CD8-positive, alpha-beta memory T cell (primary cell): ENCODE measurements at regions of chr12 and their contacts with region 1.

Region 1: GRCh38 chr12:64551698-64552097 is 58.6 kb upstream of the RASSF3 start:
- DNase-seq: no peak
- H3K4me3 ChIP-seq: no peak overlapping the region
- H3K4me3 Mint-ChIP-seq: no peak overlapping the region
- H3K27ac ChIP-seq: no peak overlapping the region
- H3K27ac Mint-ChIP-seq: no peak overlapping the region
- H3K4me1 ChIP-seq: peaks cover 8% of the 10 kb centered on the region
- H3K4me1 Mint-ChIP-seq: peaks cover 7 to 8% (median 7%) of the 10 kb centered on the region in 3 donors
- H3K27me3 ChIP-seq: no peaks in the 10 kb centered on the region
- H3K27me3 Mint-ChIP-seq: no peaks in the 10 kb centered on the region

Region 2: GRCh38 chr12:64610149-64610678 is 58.5 kb after region 1 on chr12 and contains the start of gene RASSF3:
- CTCF ChIA-PET with region 1: interaction called, 14 read pairs
- POLR2A ChIA-PET with region 1: interaction called, 4 read pairs
- DNase-seq: peak; percentile 71 to 82 (median 77)
- H3K4me3 ChIP-seq: peak within 1 kb of the TSS; percentile 90
- H3K4me3 Mint-ChIP-seq: peak within 1 kb of the TSS; percentile 88 to 99 (median 98)
- H3K27ac ChIP-seq: peak within 1 kb of the TSS; percentile 82
- H3K27ac Mint-ChIP-seq: peak within 1 kb of the TSS; percentile 89 to 99 (median 95)
- H3K4me1 ChIP-seq: peaks cover 40% of the 10 kb centered on the region
- H3K4me1 Mint-ChIP-seq: peaks cover 29 to 53% (median 42%) of the 10 kb centered on the region in 3 donors
- H3K27me3 ChIP-seq: no peaks in the 10 kb centered on the region
- H3K27me3 Mint-ChIP-seq: no peaks in the 10 kb centered on the region
- total RNA-seq, gene RASSF3: 58.2 to 59.2 TPM

Region 3: GRCh38 chr12:64669270-64669842 is 117.7 kb after region 1 on chr12:
- CTCF ChIA-PET with region 1: interaction called, 18 read pairs
- POLR2A ChIA-PET with region 1: no interaction called
- DNase-seq: peak; percentile 28 to 85 (median 70)
- H3K4me3 ChIP-seq: peak overlapping the region; percentile 66
- H3K4me3 Mint-ChIP-seq: peak overlapping the region; percentile 85 to 94 (median 92)
- H3K27ac ChIP-seq: peak overlapping the region; percentile 79
- H3K27ac Mint-ChIP-seq: peak overlapping the region; percentile 91 to 99 (median 96)
- H3K4me1 ChIP-seq: peaks cover 99% of the 10 kb centered on the region
- H3K4me1 Mint-ChIP-seq: peaks cover 93 to 96% (median 95%) of the 10 kb centered on the region in 3 donors
- H3K27me3 ChIP-seq: no peaks in the 10 kb centered on the region
- H3K27me3 Mint-ChIP-seq: no peaks in the 10 kb centered on the region

Region 4: GRCh38 chr12:64687816-64688215 is 136.1 kb after region 1 on chr12:
- CTCF ChIA-PET with region 1: interaction called, 23 read pairs
- POLR2A ChIA-PET with region 1: interaction called, 5 read pairs
- DNase-seq: peak in 1 of 5 donors; percentile 73
- H3K4me3 ChIP-seq: peak overlapping the region; percentile 0
- H3K4me3 Mint-ChIP-seq: peak overlapping the region in 6 of 7 donors; percentile 24 to 75 (median 38)
- H3K27ac ChIP-seq: no peak overlapping the region
- H3K27ac Mint-ChIP-seq: peak overlapping the region; percentile 65 to 99 (median 86)
- H3K4me1 ChIP-seq: peaks cover 87% of the 10 kb centered on the region
- H3K4me1 Mint-ChIP-seq: peaks cover 70 to 85% (median 85%) of the 10 kb centered on the region in 3 donors
- H3K27me3 ChIP-seq: no peaks in the 10 kb centered on the region
- H3K27me3 Mint-ChIP-seq: no peaks in the 10 kb centered on the region

Region 5: DNA sequence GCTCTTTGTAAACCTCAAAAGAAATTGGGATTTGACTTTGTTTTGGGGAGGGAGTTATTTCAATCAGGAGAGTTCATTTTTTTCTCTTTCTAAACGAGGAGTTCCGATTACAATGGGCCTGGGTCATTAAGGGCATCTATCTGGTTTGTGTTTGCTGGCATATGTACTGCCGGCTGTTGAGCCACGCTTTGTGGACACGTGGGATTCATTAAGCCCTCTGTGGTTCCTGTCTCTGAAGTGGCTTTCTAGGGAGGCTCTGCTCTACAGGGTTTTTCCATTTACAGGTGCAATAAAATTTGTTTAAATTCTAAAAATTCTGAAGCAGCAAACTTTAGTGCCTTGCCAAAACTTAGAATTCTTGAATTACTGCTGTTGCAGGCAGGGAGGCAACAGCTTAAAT is 149.6 kb after region 1 on chr12:
- CTCF ChIA-PET with region 1: interaction called, 100 read pairs
- POLR2A ChIA-PET with region 1: interaction called, 11 read pairs
- DNase-seq: no peak
- H3K4me3 ChIP-seq: no peak overlapping the region
- H3K4me3 Mint-ChIP-seq: peak overlapping the region; percentile 18 to 83 (median 47)
- H3K27ac ChIP-seq: no peak overlapping the region
- H3K27ac Mint-ChIP-seq: peak overlapping the region; percentile 51 to 96 (median 84)
- H3K4me1 ChIP-seq: peaks cover 36% of the 10 kb centered on the region
- H3K4me1 Mint-ChIP-seq: peaks cover 41 to 50% (median 49%) of the 10 kb centered on the region in 3 donors
- H3K27me3 ChIP-seq: no peaks in the 10 kb centered on the region
- H3K27me3 Mint-ChIP-seq: no peaks in the 10 kb centered on the region

Region 6: DNA sequence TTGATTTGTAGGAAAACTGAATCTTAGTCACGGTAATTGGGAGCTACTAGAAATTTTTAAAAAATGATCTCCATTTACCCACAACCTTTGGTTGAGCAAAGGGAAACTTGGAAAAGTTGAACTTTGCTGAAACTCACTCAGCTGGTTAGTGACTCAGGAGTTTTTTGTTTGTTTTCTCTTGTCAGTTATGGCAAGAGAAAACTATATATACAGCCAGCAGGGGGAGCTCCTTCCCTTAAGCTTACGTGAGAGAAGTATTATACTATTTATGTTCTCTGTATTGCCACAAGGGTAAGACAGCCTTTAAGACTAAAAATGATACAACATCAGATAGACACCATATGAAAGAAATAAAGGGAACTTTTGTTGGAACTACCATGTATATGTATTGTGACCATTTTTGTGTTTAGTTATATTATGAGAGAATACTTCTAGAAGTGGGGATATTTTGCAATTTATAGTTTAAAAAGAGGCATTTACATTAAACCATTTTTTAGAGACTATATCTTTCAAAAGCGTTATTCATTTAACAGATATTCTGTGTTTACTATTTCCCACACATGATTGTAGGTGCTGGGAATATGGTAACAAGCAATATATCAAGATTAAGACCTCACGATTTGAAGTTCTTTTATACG is 244.6 kb after region 1 on chr12:
- CTCF ChIA-PET with region 1: interaction called, 10 read pairs
- POLR2A ChIA-PET with region 1: no interaction called
- DNase-seq: peak; percentile 38 to 61 (median 54)
- H3K4me3 ChIP-seq: no peak overlapping the region
- H3K4me3 Mint-ChIP-seq: no peak overlapping the region
- H3K27ac ChIP-seq: no peak overlapping the region
- H3K27ac Mint-ChIP-seq: no peak overlapping the region
- H3K4me1 ChIP-seq: no peaks in the 10 kb centered on the region
- H3K4me1 Mint-ChIP-seq: peaks cover 0 to 2% (median 0%) of the 10 kb centered on the region in 3 donors
- H3K27me3 ChIP-seq: no peaks in the 10 kb centered on the region
- H3K27me3 Mint-ChIP-seq: peaks cover 8 to 32% of the 10 kb centered on the region in 2 donors